AG04449 (cell line): ENCODE measurements at regions of chr17 and their contacts with region 1.

Region 1: DNA sequence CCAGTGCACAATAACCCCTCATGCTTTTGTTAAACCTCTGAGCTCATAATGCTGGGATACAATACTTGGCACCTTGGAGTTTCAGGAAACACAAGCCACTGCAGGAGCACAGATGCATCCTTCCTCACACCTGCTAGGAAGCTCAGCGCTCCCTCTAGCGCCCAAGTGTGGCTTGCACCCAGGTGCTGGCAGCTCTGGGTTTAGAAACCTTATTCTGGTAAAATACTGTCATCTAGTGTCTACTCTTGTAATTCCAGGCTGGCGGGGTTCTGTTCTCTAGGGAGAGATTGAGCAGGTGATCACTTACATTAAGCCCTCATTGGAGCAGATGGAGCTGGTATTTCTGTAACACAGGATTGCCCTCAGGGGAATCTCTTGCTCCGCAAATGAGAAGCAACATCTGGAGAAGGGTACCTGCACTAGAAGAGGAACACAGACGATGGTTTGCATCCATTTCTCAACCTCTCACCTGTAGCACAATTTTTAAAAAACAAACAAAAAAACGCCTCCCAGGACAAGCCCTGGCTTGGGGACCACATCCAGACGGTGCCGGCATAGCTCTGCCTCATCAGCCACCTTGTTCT is 1.5 kb downstream of the CCL1 start:
- DNase-seq: peak; percentile 40
- H3K4me3 ChIP-seq: no peak overlapping the region
- CTCF ChIP-seq: peak; percentile 96

Region 2: GRCh38 chr17:34171245-34171818 is 190.2 kb before region 1 on chr17:
- CTCF ChIA-PET with region 1: interaction called, 153 read pairs
- POLR2A ChIA-PET with region 1: no interaction called
- DNase-seq: no peak
- H3K4me3 ChIP-seq: no peak overlapping the region
- CTCF ChIP-seq: peak; percentile 80

Region 3: DNA sequence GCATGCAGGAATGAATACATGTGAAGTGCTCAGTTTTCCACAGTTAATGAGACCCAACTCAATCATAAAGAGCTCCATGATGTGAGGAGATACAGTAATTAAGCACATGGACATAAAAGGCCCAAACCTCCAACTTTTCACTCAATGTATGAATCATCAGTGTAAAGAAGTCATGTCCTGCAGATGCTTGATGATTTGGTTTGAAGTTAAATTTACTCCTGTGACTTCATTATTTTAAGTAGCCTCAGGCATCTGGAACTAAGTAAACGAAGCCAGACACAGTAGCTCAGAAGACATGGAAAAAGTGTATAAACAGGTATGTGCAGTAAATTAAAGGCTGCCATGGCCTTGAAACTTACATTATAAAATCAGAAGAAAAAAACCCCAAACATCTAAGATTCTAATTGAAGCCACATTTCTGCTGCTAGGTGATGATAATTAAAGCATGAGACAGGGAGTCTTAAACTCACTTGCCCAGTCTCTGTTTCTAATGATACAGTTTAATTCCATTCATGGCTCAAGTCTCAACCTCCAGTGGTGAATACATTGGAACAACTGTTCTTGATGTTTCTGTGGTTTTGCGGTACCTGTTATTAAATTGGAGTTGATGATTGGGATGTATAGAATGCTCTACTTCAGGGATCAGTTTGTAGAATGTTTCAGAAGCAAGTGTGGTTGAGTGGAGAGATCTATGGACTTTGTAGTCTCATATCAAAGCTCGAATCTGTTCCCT is 135.4 kb before region 1 on chr17:
- CTCF ChIA-PET with region 1: interaction called, 20 read pairs
- POLR2A ChIA-PET with region 1: no interaction called
- DNase-seq: no peak
- H3K4me3 ChIP-seq: no peak overlapping the region
- CTCF ChIP-seq: no peak

Region 4: DNA sequence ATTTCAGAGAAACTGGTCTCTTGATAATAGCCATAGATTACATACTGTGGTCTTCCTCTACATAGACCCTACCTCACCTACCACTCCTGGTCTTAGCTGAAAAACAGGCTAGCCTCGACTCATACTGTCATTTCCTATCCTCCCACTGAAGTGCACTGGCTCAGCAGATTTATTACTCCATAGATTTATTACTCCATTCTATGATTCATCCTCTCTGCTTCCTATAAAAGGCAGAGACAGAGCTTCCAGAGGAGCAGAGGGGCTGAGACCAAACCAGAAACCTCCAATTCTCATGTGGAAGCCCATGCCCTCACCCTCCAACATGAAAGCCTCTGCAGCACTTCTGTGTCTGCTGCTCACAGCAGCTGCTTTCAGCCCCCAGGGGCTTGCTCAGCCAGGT is 91.6 kb before region 1 on chr17 and contains the start of gene CCL7:
- CTCF ChIA-PET with region 1: interaction called, 19 read pairs
- POLR2A ChIA-PET with region 1: no interaction called
- DNase-seq: no peak
- H3K4me3 ChIP-seq: no peak within 1 kb of the TSS
- CTCF ChIP-seq: no peak

Region 5: GRCh38 chr17:34318474-34318873 is 43.1 kb before region 1 on chr17:
- CTCF ChIA-PET with region 1: interaction called, 163 read pairs
- POLR2A ChIA-PET with region 1: no interaction called
- DNase-seq: no peak
- H3K4me3 ChIP-seq: no peak overlapping the region
- CTCF ChIP-seq: no peak

Region 6: DNA sequence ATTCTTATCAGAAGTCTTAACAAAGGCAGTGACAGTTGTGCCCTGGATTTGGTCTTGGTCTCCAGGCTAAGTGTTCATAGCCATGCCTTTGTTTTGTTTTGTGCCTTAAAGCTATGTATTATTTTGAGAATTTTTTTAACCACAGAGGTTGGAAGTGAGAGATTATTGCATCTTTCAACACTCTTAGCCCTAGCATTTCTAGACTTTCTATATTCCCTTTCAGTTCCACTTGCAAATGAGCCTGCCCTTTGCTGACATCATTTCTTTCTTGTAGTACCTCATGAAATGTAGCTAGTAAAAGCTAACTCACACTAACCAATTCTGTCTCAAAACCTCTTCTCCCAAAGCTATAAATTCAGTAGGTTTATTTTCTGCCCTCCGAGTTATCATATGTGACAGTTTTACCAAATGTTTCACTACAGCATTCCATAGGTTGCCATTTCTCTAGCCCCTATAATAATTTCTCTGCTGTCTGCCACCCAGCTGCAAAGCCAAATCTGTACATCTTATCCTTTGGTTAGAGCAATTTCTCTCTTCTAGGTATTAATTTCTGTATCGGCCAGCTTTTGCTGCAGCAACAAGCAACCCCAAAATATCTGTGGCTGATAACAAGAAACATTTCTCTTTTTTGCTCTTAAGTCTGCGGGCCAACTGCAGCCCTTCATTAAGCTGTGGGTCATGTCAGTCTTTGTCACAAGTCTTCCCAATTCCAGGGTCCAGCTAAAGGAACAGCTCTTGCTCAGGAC is 15.7 kb after region 1 on chr17:
- CTCF ChIA-PET with region 1: interaction called, 36 read pairs
- POLR2A ChIA-PET with region 1: no interaction called
- DNase-seq: no peak
- H3K4me3 ChIP-seq: no peak overlapping the region
- CTCF ChIP-seq: no peak